Caco-2 (cell line): ENCODE measurements at regions of chr15 and their contacts with region 1.

Region 1: GRCh38 chr15:29821416-29822131 is 694 bp downstream of the TJP1 start:
- DNase-seq: peak; percentile 96 to 97
- H3K4me3 ChIP-seq: peak overlapping the region; percentile 80
- H3K4me3 Mint-ChIP-seq: peak overlapping the region; percentile 93
- H3K27ac Mint-ChIP-seq: peak overlapping the region; percentile 97
- H3K4me1 ChIP-seq: peaks cover 20% of the 10 kb centered on the region
- H3K4me1 Mint-ChIP-seq: peaks cover 15% of the 10 kb centered on the region
- H3K27me3 ChIP-seq: no peaks in the 10 kb centered on the region
- H3K27me3 Mint-ChIP-seq: no peaks in the 10 kb centered on the region
- CTCF ChIP-seq: peak in 1 of 2 experiments; percentile 31

Region 2: DNA sequence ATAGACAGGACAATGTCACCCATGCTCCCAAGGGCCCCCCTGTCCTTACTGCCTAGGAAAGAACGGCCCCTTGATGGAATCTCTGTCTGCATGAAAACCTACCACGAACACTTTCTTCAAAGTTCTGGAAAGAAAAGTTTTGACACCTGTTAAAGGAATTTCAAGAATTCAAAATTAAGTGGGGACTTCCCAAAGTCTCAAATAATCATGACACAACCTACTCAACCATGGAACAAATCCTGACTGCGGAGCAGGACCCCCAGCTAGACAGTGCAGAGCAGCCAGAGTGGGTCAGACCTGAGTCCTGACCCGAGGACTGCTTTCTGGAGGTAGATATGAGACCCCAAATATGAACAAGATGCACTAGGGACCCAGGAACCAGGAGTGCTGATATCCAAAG is 306.6 kb before region 1 on chr15:
- CTCF ChIA-PET with region 1: no interaction called
- POLR2A ChIA-PET with region 1: no interaction called
- intact Hi-C with region 1: no loop called
- DNase-seq: no peak
- H3K4me3 ChIP-seq: no peak overlapping the region
- H3K4me3 Mint-ChIP-seq: no peak overlapping the region
- H3K27ac Mint-ChIP-seq: no peak overlapping the region
- H3K4me1 ChIP-seq: no peaks in the 10 kb centered on the region
- H3K4me1 Mint-ChIP-seq: no peaks in the 10 kb centered on the region
- H3K27me3 ChIP-seq: no peaks in the 10 kb centered on the region
- H3K27me3 Mint-ChIP-seq: no peaks in the 10 kb centered on the region
- CTCF ChIP-seq: no peak

Region 3: GRCh38 chr15:29740692-29741311 is 80.8 kb before region 1 on chr15:
- CTCF ChIA-PET with region 1: no interaction called
- POLR2A ChIA-PET with region 1: no interaction called
- intact Hi-C with region 1: loop called (anchors 2 kb)
- DNase-seq: peak; percentile 42 to 44
- H3K4me3 ChIP-seq: no peak overlapping the region
- H3K4me3 Mint-ChIP-seq: no peak overlapping the region
- H3K27ac Mint-ChIP-seq: no peak overlapping the region
- H3K4me1 ChIP-seq: peaks cover 30% of the 10 kb centered on the region
- H3K4me1 Mint-ChIP-seq: peaks cover 23% of the 10 kb centered on the region
- H3K27me3 ChIP-seq: no peaks in the 10 kb centered on the region
- H3K27me3 Mint-ChIP-seq: no peaks in the 10 kb centered on the region
- CTCF ChIP-seq: peak in 1 of 2 experiments; percentile 60

Region 4: GRCh38 chr15:29859973-29860715 is 38.6 kb after region 1 on chr15:
- CTCF ChIA-PET with region 1: no interaction called
- POLR2A ChIA-PET with region 1: interaction called, 3 read pairs
- intact Hi-C with region 1: loop called (anchors 5 kb)
- DNase-seq: no peak
- H3K4me3 ChIP-seq: no peak overlapping the region
- H3K4me3 Mint-ChIP-seq: no peak overlapping the region
- H3K27ac Mint-ChIP-seq: no peak overlapping the region
- H3K4me1 ChIP-seq: peaks cover 5% of the 10 kb centered on the region; the same call in 1 of the 2 replicates
- H3K4me1 Mint-ChIP-seq: peaks cover 7% of the 10 kb centered on the region
- H3K27me3 ChIP-seq: no peaks in the 10 kb centered on the region
- H3K27me3 Mint-ChIP-seq: no peaks in the 10 kb centered on the region
- CTCF ChIP-seq: no peak

Region 5: DNA sequence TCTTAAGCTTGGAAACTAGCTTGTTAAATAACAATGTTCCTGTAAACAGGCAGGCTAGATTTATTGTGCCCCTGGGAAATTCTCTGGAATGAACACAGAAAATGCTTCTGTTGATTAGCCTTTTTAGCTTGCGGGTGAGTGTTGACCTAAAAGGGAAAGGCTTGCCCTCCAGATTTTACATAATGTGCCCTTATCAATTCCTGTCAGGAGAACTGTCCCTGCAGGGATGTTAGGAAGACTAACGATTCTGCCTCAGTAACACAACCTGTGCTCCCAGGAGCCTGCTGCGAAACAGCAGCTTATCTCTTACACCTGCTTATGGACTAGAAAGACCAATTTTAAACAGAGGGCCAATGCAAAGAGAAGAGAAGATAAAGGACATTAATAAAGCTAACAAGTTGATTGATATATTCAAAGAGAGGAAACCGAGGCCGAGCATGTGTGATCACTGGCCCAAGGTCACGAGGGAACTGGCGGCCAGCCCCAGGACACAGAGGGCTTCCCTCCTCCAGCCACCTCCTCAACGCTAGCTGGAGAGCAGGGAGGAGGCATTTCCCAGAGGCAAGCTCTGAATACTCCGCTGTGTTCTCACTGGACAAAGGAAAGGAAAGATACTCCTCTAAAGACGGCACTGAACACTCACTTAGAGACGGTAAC is 49.0 kb after region 1 on chr15:
- CTCF ChIA-PET with region 1: no interaction called
- POLR2A ChIA-PET with region 1: no interaction called
- intact Hi-C with region 1: loop called (anchors 2 kb)
- DNase-seq: peak; percentile 29 to 68
- H3K4me3 ChIP-seq: no peak overlapping the region
- H3K4me3 Mint-ChIP-seq: peak overlapping the region; percentile 23
- H3K27ac Mint-ChIP-seq: peak overlapping the region; percentile 48
- H3K4me1 ChIP-seq: peaks cover 14% of the 10 kb centered on the region
- H3K4me1 Mint-ChIP-seq: peaks cover 20% of the 10 kb centered on the region
- H3K27me3 ChIP-seq: no peaks in the 10 kb centered on the region
- H3K27me3 Mint-ChIP-seq: no peaks in the 10 kb centered on the region
- CTCF ChIP-seq: no peak

Region 6: GRCh38 chr15:30008156-30008555 is 186.6 kb after region 1 on chr15:
- CTCF ChIA-PET with region 1: no interaction called
- POLR2A ChIA-PET with region 1: no interaction called
- intact Hi-C with region 1: no loop called
- DNase-seq: no peak
- H3K4me3 ChIP-seq: no peak overlapping the region
- H3K4me3 Mint-ChIP-seq: no peak overlapping the region
- H3K27ac Mint-ChIP-seq: no peak overlapping the region
- H3K4me1 ChIP-seq: no peaks in the 10 kb centered on the region
- H3K4me1 Mint-ChIP-seq: no peaks in the 10 kb centered on the region
- H3K27me3 ChIP-seq: no peaks in the 10 kb centered on the region
- H3K27me3 Mint-ChIP-seq: peaks cover 12% of the 10 kb centered on the region
- CTCF ChIP-seq: no peak